Tibial artery (tissue), 4 donors: ENCODE measurements at regions of chr14 and their contacts with region 1.

Region 1: GRCh38 chr14:31420319-31421111 is at the start of gene HEATR5A:
- DNase-seq: peak; percentile 94 to 97
- H3K4me3 ChIP-seq: peak within 1 kb of the TSS; percentile 83 to 88
- H3K27ac ChIP-seq: peak within 1 kb of the TSS; percentile 84 to 85
- H3K4me1 ChIP-seq: peaks cover 0 to 31% (median 9%) of the 10 kb centered on the region in 4 donors
- H3K27me3 ChIP-seq: no peaks in the 10 kb centered on the region
- CTCF ChIP-seq: peak in 1 of 2 experiments; percentile 28

Region 2: GRCh38 chr14:31389946-31390345 is 30.6 kb before region 1 on chr14:
- intact Hi-C with region 1: no loop called
- DNase-seq: no peak
- H3K4me3 ChIP-seq: no peak overlapping the region
- H3K27ac ChIP-seq: peak overlapping the region; percentile 30 to 37
- H3K4me1 ChIP-seq: peaks cover 0 to 19% (median 2%) of the 10 kb centered on the region in 4 donors
- H3K27me3 ChIP-seq: no peaks in the 10 kb centered on the region
- CTCF ChIP-seq: no peak

Region 3: GRCh38 chr14:31456841-31457664 is 36.5 kb after region 1 on chr14 and contains the start of gene DTD2:
- intact Hi-C with region 1: loop called (anchors 2 kb)
- DNase-seq: peak; percentile 95 to 96
- H3K4me3 ChIP-seq: peak within 1 kb of the TSS; percentile 77 to 79
- H3K27ac ChIP-seq: peak within 1 kb of the TSS; percentile 88 to 89
- H3K4me1 ChIP-seq: peaks cover 0 to 33% (median 15%) of the 10 kb centered on the region in 4 donors
- H3K27me3 ChIP-seq: no peaks in the 10 kb centered on the region
- CTCF ChIP-seq: no peak

Region 4: DNA sequence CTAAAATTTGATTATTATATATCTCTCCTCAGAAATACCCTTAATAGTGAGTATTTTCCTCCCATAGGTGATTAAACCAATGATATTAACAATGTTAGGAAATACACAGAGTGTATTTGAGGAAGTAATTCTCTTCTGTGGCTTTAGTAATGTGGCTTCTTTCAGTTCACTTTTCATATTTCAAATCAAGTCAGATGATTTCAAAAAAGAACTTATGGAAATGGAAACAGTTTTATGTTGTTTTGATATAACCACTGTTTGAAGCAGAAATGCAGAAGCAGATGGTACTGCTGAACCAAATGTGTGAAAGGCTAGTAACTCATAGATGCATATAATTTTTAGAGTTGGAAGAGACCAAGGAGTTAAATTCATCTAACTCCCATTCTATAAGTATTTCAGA is 69.2 kb after region 1 on chr14:
- intact Hi-C with region 1: no loop called
- DNase-seq: no peak
- H3K4me3 ChIP-seq: no peak overlapping the region
- H3K27ac ChIP-seq: no peak overlapping the region
- H3K4me1 ChIP-seq: peaks cover 0 to 4% (median 1%) of the 10 kb centered on the region in 4 donors
- H3K27me3 ChIP-seq: no peaks in the 10 kb centered on the region
- CTCF ChIP-seq: no peak